SK-N-SH (cell line): ENCODE measurements at regions of chr18 and their contacts with region 1.

Region 1: DNA sequence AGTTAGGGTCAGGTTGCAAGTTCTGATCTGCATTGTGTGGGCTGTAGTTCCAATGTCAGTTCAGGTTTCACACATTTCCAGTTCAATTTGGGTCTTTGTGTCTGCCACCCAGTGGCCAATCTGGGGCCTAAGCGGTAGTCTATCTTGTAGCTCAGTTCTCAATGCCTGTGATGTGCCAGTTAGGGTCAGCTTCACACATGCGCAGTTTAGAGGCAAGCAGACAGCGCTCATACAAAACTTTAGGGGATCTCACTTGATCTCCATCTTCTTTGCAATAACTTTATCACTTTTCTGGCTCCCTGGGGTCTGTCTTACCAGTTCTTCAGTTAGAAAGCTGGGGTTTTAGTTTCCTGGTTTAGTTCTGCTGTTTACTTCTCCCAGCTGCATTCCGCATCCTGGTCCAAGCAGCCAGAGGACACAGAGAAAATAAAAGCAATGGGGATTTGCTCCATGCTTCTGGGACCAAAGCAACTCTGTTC is 11.0 kb upstream of the ZNF24 start:
- DNase-seq: peak; percentile 72
- H3K4me3 ChIP-seq: peak overlapping the region in 1 of 2 experiments; percentile 25; a peak in 3 of 4 replicates
- H3K27ac ChIP-seq: no peak overlapping the region; a peak in 1 of 4 replicates
- H3K4me1 ChIP-seq: peaks cover 0 to 2% of the 10 kb centered on the region in 2 experiments; a peak in 1 of 4 replicates
- H3K27me3 ChIP-seq: no peaks in the 10 kb centered on the region
- CTCF ChIP-seq: peak; percentile 71
- EP300 ChIP-seq: no peak
- RAD21 ChIP-seq: peak; percentile 73

Region 2: GRCh38 chr18:35231052-35231451 is 124.1 kb before region 1 on chr18:
- CTCF ChIA-PET with region 1: interaction called, 16 read pairs
- POLR2A ChIA-PET with region 1: interaction called, 3 read pairs
- DNase-seq: peak; percentile 71
- H3K4me3 ChIP-seq: peak overlapping the region; percentile 32 to 42; a peak in 3 of 4 replicates
- H3K27ac ChIP-seq: no peak overlapping the region; a peak in 1 of 4 replicates
- H3K4me1 ChIP-seq: no peaks in the 10 kb centered on the region; a peak in 1 of 4 replicates
- H3K27me3 ChIP-seq: no peaks in the 10 kb centered on the region
- CTCF ChIP-seq: peak; percentile 92
- EP300 ChIP-seq: no peak; a peak in 1 of 4 replicates
- RAD21 ChIP-seq: peak; percentile 92

Region 3: GRCh38 chr18:35343936-35344735 is 11.0 kb before region 1 on chr18 and contains the start of gene ZNF24:
- CTCF ChIA-PET with region 1: interaction called, 28 read pairs
- POLR2A ChIA-PET with region 1: no interaction called
- DNase-seq: peak; percentile 95
- H3K4me3 ChIP-seq: peak within 1 kb of the TSS; percentile 81 to 83
- H3K27ac ChIP-seq: peak within 1 kb of the TSS; percentile 96 to 98
- H3K4me1 ChIP-seq: peaks cover 0 to 15% of the 10 kb centered on the region in 2 experiments; a peak in 3 of 4 replicates
- H3K27me3 ChIP-seq: no peaks in the 10 kb centered on the region
- CTCF ChIP-seq: no peak
- EP300 ChIP-seq: peak in 1 of 2 experiments; percentile 12; a peak in 2 of 4 replicates
- RAD21 ChIP-seq: no peak
- polyA plus RNA-seq, gene ZNF24: 6.9 and 10.0 TPM in 2 replicates